CD14-positive monocyte (primary cell): ENCODE measurements at regions of chr10 and their contacts with region 1.

Region 1: GRCh38 chr10:28334296-28334695 is 31.4 kb upstream of the MPP7 start:
- DNase-seq: peak; percentile 89 to 98 (median 89)
- H3K4me3 ChIP-seq: no peak overlapping the region
- H3K4me3 Mint-ChIP-seq: peak overlapping the region; percentile 24 to 57
- H3K27ac ChIP-seq: peak overlapping the region; percentile 95 to 97
- H3K27ac Mint-ChIP-seq: peak overlapping the region; percentile 90 to 99 (median 99)
- H3K4me1 ChIP-seq: peaks cover 67% of the 10 kb centered on the region in 2 donors
- H3K4me1 Mint-ChIP-seq: peaks cover 63% of the 10 kb centered on the region
- H3K27me3 ChIP-seq: no peaks in the 10 kb centered on the region
- H3K27me3 Mint-ChIP-seq: no peaks in the 10 kb centered on the region
- CTCF ChIP-seq: no peak

Region 2: DNA sequence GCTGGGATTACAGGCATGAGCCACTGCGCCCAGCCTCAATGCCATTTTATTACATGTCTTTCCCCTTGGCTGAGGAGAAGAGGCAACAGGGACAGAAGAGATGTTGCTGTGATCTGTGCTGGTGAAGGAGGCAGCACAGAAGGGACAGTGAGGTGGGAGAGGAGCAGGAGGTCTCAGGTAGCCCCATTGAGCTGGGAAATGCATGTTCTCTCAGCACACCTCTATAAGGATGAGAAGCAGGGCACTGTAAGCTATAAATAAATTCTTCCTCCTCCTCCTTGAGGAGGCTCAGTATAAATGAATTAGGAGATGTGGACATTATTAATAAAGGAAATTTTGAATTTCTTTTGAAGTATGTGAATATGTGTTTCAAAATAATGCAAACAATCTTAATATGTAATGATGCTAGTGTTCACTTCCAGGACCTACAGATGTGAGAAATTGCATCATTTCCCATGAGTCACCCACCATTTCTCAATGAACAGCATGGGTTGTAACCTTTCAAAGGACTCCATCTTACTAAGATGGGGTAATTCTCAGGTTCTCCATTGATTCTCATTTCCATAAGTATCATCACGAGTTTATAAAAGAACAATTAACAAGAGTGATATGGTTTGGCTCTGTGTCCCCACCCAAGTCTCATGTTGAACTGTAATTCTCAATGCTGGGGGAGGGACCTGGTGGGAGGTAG is 246.5 kb before region 1 on chr10:
- intact Hi-C with region 1: no loop called
- DNase-seq: peak; percentile 77 to 87 (median 86)
- H3K4me3 ChIP-seq: no peak overlapping the region
- H3K4me3 Mint-ChIP-seq: no peak overlapping the region
- H3K27ac ChIP-seq: peak overlapping the region in 1 of 2 donors; percentile 62
- H3K27ac Mint-ChIP-seq: peak overlapping the region; percentile 72 to 91 (median 81)
- H3K4me1 ChIP-seq: peaks cover 3 to 10% of the 10 kb centered on the region in 2 donors
- H3K4me1 Mint-ChIP-seq: peaks cover 11% of the 10 kb centered on the region
- H3K27me3 ChIP-seq: no peaks in the 10 kb centered on the region
- H3K27me3 Mint-ChIP-seq: no peaks in the 10 kb centered on the region
- CTCF ChIP-seq: no peak

Region 3: GRCh38 chr10:28367929-28368484 is 33.7 kb after region 1 on chr10:
- intact Hi-C with region 1: loop called (anchors 5 kb)
- DNase-seq: peak; percentile 86 to 95 (median 90)
- H3K4me3 ChIP-seq: peak overlapping the region in 1 of 3 experiments; percentile 53
- H3K4me3 Mint-ChIP-seq: peak overlapping the region in 1 of 2 donors; percentile 42
- H3K27ac ChIP-seq: peak overlapping the region; percentile 83 to 95
- H3K27ac Mint-ChIP-seq: peak overlapping the region; percentile 90 to 96 (median 95)
- H3K4me1 ChIP-seq: peaks cover 56 to 63% of the 10 kb centered on the region in 2 donors
- H3K4me1 Mint-ChIP-seq: peaks cover 58% of the 10 kb centered on the region
- H3K27me3 ChIP-seq: no peaks in the 10 kb centered on the region
- H3K27me3 Mint-ChIP-seq: peaks cover 0 to 2% (median 0%) of the 10 kb centered on the region in 3 donors
- CTCF ChIP-seq: no peak